ENCODE measurements at regions of chr14 and their contacts with region 1.

Region 1: GRCh38 chr14:73058224-73058921 is at the start of gene RBM25:
- DNase-seq: peak; percentile 94
- H3K4me3 Mint-ChIP-seq: no peak within 1 kb of the TSS
- H3K27ac Mint-ChIP-seq: no peak within 1 kb of the TSS
- H3K4me1 Mint-ChIP-seq: peaks cover 32% of the 10 kb centered on the region
- H3K27me3 Mint-ChIP-seq: no peaks in the 10 kb centered on the region
- total RNA-seq, gene RBM25: 128 and 129 TPM in 2 replicates

Region 2: DNA sequence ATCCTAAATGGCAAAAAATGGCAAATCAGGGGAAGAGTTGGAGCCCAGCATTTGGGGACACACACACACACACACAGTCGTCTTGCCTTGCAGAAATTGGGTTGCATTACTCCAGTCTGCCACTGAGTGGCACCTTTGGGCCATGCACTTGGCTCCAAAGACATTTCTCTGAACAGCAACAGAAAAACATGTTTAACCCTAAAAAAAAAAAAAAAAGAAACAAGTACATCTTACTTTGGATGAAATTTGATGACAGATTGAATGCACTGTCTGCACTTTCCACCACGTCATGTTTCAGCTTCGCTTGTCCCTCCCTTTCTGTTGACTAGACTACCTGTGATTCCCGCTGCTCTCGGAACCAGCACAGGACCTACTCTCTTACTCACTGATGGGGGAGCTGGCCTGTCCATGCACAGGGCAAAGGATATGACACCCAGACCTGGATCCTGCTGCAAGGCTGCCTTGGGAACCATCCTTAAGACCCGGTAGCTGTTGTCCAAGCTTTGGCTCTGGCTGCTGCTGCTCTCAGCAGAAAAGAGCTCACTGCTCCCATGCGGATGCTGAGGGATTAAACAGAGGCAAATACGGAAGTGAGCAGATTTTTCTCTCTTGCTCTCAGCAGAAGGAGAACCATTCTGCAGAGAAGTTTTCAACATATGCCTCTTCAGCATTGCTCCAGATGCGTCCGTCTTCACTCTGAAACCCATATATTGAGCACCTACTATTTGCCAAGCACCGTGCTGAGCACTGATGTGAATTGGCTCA is 541.3 kb before region 1 on chr14:
- intact Hi-C with region 1: loop called (anchors 2 kb)
- DNase-seq: peak; percentile 73
- H3K4me3 Mint-ChIP-seq: no peak overlapping the region
- H3K27ac Mint-ChIP-seq: no peak overlapping the region
- H3K4me1 Mint-ChIP-seq: peaks cover 87% of the 10 kb centered on the region
- H3K27me3 Mint-ChIP-seq: peaks cover 2% of the 10 kb centered on the region

Region 3: DNA sequence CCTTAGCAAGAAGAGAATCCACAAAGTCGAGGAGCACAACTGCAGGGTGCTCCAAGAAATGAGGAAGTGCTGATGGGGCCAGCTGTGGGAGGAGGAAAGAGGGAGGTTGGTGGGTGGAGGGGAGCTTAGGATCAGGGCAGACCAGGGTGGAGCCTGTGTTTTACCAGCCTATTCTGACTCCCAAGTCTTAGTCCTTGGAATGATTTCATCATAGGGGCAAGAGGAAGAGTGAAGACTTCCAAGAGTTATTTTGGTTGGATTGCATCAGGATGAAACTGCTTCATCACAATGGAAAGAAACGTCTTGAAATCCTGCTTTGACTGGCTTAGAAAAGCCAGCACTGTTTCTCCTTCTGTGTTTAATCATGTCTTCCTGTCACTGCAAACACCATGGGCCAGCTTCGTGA is 358.5 kb before region 1 on chr14:
- intact Hi-C with region 1: no loop called
- DNase-seq: no peak
- H3K4me3 Mint-ChIP-seq: no peak overlapping the region
- H3K27ac Mint-ChIP-seq: peak overlapping the region; percentile 65
- H3K4me1 Mint-ChIP-seq: peaks cover 38% of the 10 kb centered on the region
- H3K27me3 Mint-ChIP-seq: peaks cover 2% of the 10 kb centered on the region

Region 4: GRCh38 chr14:72926292-72927028 is 131.9 kb before region 1 on chr14 and contains the start of gene DCAF4:
- intact Hi-C with region 1: loop called (anchors 1 kb)
- DNase-seq: peak; percentile 94
- H3K4me3 Mint-ChIP-seq: peak within 1 kb of the TSS; percentile 90
- H3K27ac Mint-ChIP-seq: peak within 1 kb of the TSS; percentile 95
- H3K4me1 Mint-ChIP-seq: peaks cover 8% of the 10 kb centered on the region
- H3K27me3 Mint-ChIP-seq: peaks cover 16% of the 10 kb centered on the region
- total RNA-seq, gene DCAF4: 17.1 and 20.4 TPM in 2 replicates

Region 5: GRCh38 chr14:73008501-73008900 is 49.9 kb before region 1 on chr14:
- intact Hi-C with region 1: no loop called
- DNase-seq: no peak
- H3K4me3 Mint-ChIP-seq: no peak overlapping the region
- H3K27ac Mint-ChIP-seq: no peak overlapping the region
- H3K4me1 Mint-ChIP-seq: peaks cover 5% of the 10 kb centered on the region
- H3K27me3 Mint-ChIP-seq: no peaks in the 10 kb centered on the region

Region 6: GRCh38 chr14:73026845-73027542 is 31.4 kb before region 1 on chr14 and contains the start of gene ZFYVE1:
- intact Hi-C with region 1: loop called (anchors 1 kb)
- DNase-seq: peak; percentile 90
- H3K4me3 Mint-ChIP-seq: peak within 1 kb of the TSS; percentile 97
- H3K27ac Mint-ChIP-seq: peak within 1 kb of the TSS; percentile 94
- H3K4me1 Mint-ChIP-seq: peaks cover 44% of the 10 kb centered on the region
- H3K27me3 Mint-ChIP-seq: peaks cover 1% of the 10 kb centered on the region
- total RNA-seq, gene ZFYVE1: 7.1 and 7.6 TPM in 2 replicates

Region 7: GRCh38 chr14:73290279-73290678 is 231.9 kb after region 1 on chr14:
- intact Hi-C with region 1: loop called (anchors 2 kb)
- DNase-seq: no peak
- H3K4me3 Mint-ChIP-seq: peak overlapping the region; percentile 25
- H3K27ac Mint-ChIP-seq: peak overlapping the region; percentile 63
- H3K4me1 Mint-ChIP-seq: peaks cover 49% of the 10 kb centered on the region
- H3K27me3 Mint-ChIP-seq: no peaks in the 10 kb centered on the region

Region 8: DNA sequence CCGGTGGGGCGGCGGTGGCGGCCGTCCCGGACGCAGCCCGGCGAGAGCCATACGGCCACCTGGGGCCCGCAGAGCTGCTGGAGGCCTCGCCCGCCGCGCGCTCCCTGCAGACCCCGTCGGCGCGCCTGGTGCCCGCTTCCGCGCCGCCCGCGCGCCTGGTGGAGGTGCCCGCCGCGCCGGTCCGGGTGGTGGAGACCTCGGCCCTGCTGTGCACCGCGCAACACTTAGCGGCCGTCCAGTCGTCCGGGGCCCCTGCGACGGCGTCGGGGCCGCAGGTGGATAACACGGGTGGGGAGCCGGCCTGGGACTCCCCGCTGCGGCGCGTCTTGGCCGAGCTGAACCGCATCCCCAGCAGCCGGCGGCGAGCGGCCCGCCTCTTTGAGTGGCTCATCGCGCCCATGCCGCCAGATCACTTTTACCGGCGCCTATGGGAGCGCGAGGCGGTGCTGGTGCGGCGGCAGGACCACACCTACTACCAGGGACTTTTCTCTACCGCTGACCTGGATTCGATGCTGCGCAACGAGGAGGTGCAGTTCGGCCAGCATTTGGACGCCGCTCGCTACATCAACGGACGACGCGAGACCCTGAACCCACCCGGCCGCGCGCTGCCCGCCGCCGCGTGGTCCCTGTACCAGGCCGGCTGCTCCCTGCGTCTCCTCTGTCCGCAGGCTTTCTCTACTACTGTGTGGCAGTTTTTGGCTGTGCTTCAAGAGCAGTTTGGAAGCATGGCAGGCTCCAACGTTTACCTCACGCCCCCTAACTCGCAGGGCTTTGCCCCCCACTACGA is 433.1 kb after region 1 on chr14:
- intact Hi-C with region 1: loop called (anchors 1 kb)
- DNase-seq: peak; percentile 75
- H3K4me3 Mint-ChIP-seq: peak overlapping the region; percentile 86
- H3K27ac Mint-ChIP-seq: peak overlapping the region; percentile 86
- H3K4me1 Mint-ChIP-seq: peaks cover 52% of the 10 kb centered on the region
- H3K27me3 Mint-ChIP-seq: peaks cover 5% of the 10 kb centered on the region

Region 9: GRCh38 chr14:74084277-74085046 is 1026.1 kb after region 1 on chr14 and contains the starts of genes ALDH6A1 and LIN52:
- intact Hi-C with region 1: loop called (anchors 5 kb)
- DNase-seq: peak; percentile 100
- H3K4me3 Mint-ChIP-seq: peak within 1 kb of the TSS; percentile 94
- H3K27ac Mint-ChIP-seq: peak within 1 kb of the TSS; percentile 94
- H3K4me1 Mint-ChIP-seq: peaks cover 45% of the 10 kb centered on the region
- H3K27me3 Mint-ChIP-seq: peaks cover 4% of the 10 kb centered on the region
- total RNA-seq, gene ALDH6A1: 10.8 and 11.0 TPM in 2 replicates
- total RNA-seq, gene LIN52: 15.9 and 17.2 TPM in 2 replicates

Measured in activated T-helper 1 cell treated with anti-CD3 and anti-CD28 coated beads, Interleukin-12 subunit alpha, Interleukin-12 subunit beta, Interleukin-2, Interleukin-4 antibody, amounts not matched to agents 30 ng/mL and 10 ng/mL and 1 ng/mL, durations not matched to agents 14 hours and 24 hours and 36 hours (primary cell).